Colonic mucosa (tissue), 4 donors: ENCODE measurements at regions of chr2 and their contacts with region 1.

Region 1: GRCh38 chr2:178891265-178891958 is 84.2 kb upstream of the TTN start:
- DNase-seq: peak; percentile 67
- H3K4me3 ChIP-seq: no peak overlapping the region
- H3K27ac ChIP-seq: no peak overlapping the region
- H3K4me1 ChIP-seq: no peaks in the 10 kb centered on the region
- H3K27me3 ChIP-seq: no peaks in the 10 kb centered on the region
- CTCF ChIP-seq: peak; percentile 95

Region 2: GRCh38 chr2:178928077-178928476 is 36.7 kb after region 1 on chr2:
- intact Hi-C with region 1: no loop called
- DNase-seq: no peak
- H3K4me3 ChIP-seq: no peak overlapping the region
- H3K27ac ChIP-seq: no peak overlapping the region
- H3K4me1 ChIP-seq: no peaks in the 10 kb centered on the region
- H3K27me3 ChIP-seq: no peaks in the 10 kb centered on the region
- CTCF ChIP-seq: no peak

Region 3: GRCh38 chr2:178998539-178998938 is 107.1 kb after region 1 on chr2:
- intact Hi-C with region 1: no loop called
- DNase-seq: no peak
- H3K4me3 ChIP-seq: no peak overlapping the region
- H3K27ac ChIP-seq: no peak overlapping the region
- H3K4me1 ChIP-seq: no peaks in the 10 kb centered on the region
- H3K27me3 ChIP-seq: no peaks in the 10 kb centered on the region
- CTCF ChIP-seq: no peak

Region 4: DNA sequence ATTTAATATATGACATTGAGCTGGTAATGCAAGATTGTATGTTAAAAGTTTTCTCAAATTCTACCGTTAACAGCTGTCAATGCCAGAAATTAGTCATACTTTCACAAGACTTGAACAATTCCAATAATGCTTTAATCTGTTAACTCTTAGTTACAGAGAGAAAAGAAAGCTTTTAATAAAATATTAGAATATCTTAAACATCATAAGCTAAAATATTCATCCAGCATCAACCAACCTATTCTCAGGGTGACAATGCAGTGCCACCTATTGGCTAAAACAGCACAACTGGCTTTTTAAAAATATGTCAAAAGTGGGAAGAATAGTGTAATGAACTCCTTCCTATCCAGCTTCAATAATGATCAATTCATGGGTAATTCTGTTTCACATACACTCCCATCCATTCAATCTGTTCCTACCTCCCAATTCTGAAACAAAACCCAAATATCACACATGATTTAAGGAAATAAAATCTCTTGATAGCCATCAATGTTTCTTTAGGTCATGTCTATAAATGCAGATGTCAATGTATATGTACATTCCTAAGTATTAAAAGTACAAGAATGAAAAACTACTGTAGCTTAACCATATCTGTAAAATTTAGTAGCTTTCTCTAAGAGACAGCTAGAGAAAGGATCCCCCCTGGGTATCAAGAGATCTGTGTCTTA is 238.3 kb after region 1 on chr2:
- intact Hi-C with region 1: loop called (anchors 5 kb)
- DNase-seq: no peak
- H3K4me3 ChIP-seq: no peak overlapping the region
- H3K27ac ChIP-seq: no peak overlapping the region
- H3K4me1 ChIP-seq: no peaks in the 10 kb centered on the region
- H3K27me3 ChIP-seq: no peaks in the 10 kb centered on the region
- CTCF ChIP-seq: peak; percentile 58

Region 5: GRCh38 chr2:179579800-179580199 is 688.4 kb after region 1 on chr2:
- intact Hi-C with region 1: no loop called
- DNase-seq: no peak
- H3K4me3 ChIP-seq: no peak overlapping the region
- H3K27ac ChIP-seq: no peak overlapping the region
- H3K4me1 ChIP-seq: no peaks in the 10 kb centered on the region
- H3K27me3 ChIP-seq: no peaks in the 10 kb centered on the region
- CTCF ChIP-seq: no peak